ENCODE measurements at regions of chr15 and their contacts with region 1.

Region 1: DNA sequence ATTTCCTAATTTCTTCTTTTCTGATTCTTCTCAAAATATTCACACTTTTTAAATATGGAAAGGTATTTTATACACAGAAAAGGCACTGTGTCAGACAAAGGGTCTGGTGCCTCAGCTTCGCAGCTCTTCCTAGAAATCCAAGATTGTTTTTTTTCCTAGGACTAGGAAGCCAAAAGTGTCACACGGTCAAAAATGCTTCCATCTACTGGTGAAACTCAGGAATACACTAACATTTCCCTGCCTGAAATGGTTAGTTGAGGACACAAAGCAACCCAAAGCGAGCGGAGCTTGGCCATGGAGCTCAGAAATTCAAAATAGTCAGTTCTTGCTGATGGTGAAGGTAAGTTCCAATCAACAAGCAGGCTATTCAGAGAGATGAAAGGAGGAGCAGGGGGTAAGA is 426.5 kb upstream of the RASGRP1 start:
- DNase-seq: no peak
- H3K4me3 ChIP-seq: no peak overlapping the region
- H3K27ac ChIP-seq: no peak overlapping the region
- H3K4me1 ChIP-seq: peaks cover 16 to 31% (median 24%) of the 10 kb centered on the region in 4 donors
- H3K27me3 ChIP-seq: no peaks in the 10 kb centered on the region
- CTCF ChIP-seq: peak; percentile 45 to 55 (median 54)
- EP300 ChIP-seq: no peak
- POLR2A ChIP-seq: no peak

Region 2: DNA sequence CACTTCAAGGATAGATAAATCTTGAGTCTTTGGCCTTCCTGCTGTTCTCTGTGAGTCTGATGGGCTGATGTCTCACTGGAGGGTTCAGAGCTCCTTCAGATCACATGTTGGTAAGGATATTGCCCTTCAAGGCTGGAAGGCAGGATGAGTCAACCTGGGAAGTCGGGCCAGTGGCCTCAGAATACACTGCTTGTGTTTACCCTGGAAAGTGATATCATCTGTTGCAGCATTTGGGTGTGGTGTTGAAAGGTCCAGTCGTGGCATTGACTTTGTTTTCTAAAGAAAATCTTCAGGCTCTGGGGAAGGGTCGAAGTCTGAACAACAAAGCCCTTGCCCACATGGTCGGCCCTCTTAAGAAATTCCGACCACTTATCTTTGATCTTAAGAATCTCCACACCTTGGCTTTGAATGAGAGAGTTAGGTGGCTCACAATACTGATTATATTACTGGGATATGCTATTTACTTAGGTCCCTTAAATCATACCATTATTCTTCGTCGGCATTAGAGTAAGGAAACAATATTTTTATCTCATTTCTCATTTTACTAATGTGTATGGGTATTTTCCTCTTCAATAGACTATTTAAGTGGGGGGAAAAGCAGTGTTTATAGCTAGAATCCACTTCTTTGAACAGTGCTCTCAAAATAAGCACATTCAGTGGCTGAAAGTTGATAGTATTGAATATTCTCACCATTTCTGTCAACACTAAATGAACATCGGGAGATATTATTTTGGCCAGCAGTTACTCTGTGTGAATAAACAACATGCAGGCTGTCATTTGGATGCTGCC is 122.6 kb before region 1 on chr15:
- intact Hi-C with region 1: no loop called
- DNase-seq: no peak
- H3K4me3 ChIP-seq: no peak overlapping the region
- H3K27ac ChIP-seq: peak overlapping the region in 1 of 4 donors; percentile 25
- H3K4me1 ChIP-seq: peaks cover 0 to 34% (median 7%) of the 10 kb centered on the region in 4 donors
- H3K27me3 ChIP-seq: no peaks in the 10 kb centered on the region
- CTCF ChIP-seq: no peak
- EP300 ChIP-seq: no peak
- POLR2A ChIP-seq: no peak

Region 3: DNA sequence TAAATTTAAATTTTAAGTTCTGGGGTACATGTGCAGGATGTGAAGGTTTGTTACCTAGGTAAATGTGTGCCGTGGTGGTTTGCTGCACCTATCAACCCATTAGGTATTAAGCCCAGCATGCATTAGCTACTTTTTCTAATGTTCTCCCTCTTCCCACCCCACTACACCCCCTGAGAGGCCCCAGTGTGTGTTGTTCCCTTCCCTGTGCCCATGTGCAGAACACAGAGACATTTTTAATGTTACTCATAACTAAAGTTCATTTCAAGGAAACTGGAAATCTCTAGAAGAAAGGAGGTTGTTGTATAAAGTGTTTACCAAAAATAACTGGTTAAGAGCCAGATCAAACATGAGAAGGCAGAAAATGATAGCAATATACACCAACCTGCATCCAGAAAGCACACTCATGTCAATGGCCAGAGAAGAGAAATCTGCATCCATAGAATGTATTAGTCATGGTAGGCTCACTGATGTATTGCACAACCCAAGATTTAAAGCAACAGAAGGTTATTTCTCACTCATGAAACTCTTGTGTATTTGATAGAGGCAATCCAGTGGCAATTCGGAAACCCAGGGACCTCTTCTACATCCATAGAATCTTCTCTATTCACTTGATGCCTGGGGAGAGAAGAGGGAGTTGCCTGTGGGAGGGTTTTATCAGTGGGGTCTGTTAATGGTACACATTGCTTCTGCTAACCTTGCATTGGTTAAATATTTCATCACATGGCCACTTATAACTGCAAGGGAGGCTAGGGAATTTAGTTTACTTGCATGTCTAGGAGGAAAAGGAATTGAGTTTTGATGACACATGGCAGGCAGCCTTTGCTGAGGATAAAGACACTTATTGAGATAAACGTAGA is 104.6 kb before region 1 on chr15:
- intact Hi-C with region 1: loop called (anchors 10 kb)
- DNase-seq: no peak
- H3K4me3 ChIP-seq: no peak overlapping the region
- H3K27ac ChIP-seq: peak overlapping the region in 1 of 4 donors; percentile 66
- H3K4me1 ChIP-seq: peaks cover 0 to 51% (median 44%) of the 10 kb centered on the region in 4 donors
- H3K27me3 ChIP-seq: no peaks in the 10 kb centered on the region
- CTCF ChIP-seq: no peak
- EP300 ChIP-seq: peak; percentile 22
- POLR2A ChIP-seq: no peak

Region 4: GRCh38 chr15:38941399-38941953 is 49.6 kb before region 1 on chr15:
- intact Hi-C with region 1: no loop called
- DNase-seq: no peak
- H3K4me3 ChIP-seq: no peak overlapping the region
- H3K27ac ChIP-seq: no peak overlapping the region
- H3K4me1 ChIP-seq: no peaks in the 10 kb centered on the region
- H3K27me3 ChIP-seq: peaks cover 0 to 4% (median 0%) of the 10 kb centered on the region in 4 donors
- CTCF ChIP-seq: no peak
- EP300 ChIP-seq: no peak
- POLR2A ChIP-seq: no peak

Region 5: DNA sequence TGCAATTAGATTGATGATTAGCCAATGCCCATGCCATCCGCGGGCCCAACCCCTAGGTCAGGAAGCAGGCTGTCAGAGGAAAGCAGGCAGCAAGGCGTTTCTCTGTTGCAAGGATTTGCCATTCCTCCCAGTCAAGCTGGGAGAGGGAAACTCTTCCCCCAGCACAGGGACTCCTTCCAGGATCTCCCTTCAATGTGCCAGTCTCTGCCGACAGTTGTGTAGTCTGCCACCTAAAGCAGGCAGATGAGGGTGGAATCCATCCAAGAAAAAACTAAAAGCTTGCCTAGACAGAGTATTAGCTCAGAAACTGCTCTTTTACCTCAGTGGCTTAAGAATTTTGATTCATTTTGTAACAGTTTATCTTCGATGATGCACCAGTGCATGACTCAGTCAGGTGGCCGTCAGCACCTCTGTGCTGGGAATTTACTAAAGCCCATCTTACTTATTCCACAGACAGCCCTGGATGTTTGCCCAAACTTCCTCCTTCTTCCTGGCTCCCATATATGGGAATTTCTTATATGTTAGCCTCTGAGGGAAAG is 88.2 kb after region 1 on chr15:
- intact Hi-C with region 1: loop called (anchors 10 kb)
- DNase-seq: no peak
- H3K4me3 ChIP-seq: no peak overlapping the region
- H3K27ac ChIP-seq: peak overlapping the region in 3 of 4 donors; percentile 29 to 58 (median 30)
- H3K4me1 ChIP-seq: peaks cover 3 to 46% (median 27%) of the 10 kb centered on the region in 4 donors
- H3K27me3 ChIP-seq: no peaks in the 10 kb centered on the region
- CTCF ChIP-seq: no peak
- EP300 ChIP-seq: no peak
- POLR2A ChIP-seq: no peak

Measured in esophagus muscularis mucosa (tissue), 4 donors.